Left ventricle myocardium superior (tissue), 1 donor: ENCODE measurements at regions of chr15 and their contacts with region 1.

Region 1: GRCh38 chr15:83436458-83437158 is 10.5 kb upstream of the SH3GL3 start:
- DNase-seq: no peak
- ATAC-seq: peak; percentile 39

Region 2: GRCh38 chr15:83250801-83251200 is 185.8 kb before region 1 on chr15:
- intact Hi-C with region 1: loop called (anchors 10 kb)
- DNase-seq: no peak
- ATAC-seq: no peak

Region 3: GRCh38 chr15:83559310-83559966 is 122.8 kb after region 1 on chr15:
- intact Hi-C with region 1: loop called (anchors 2 kb)
- DNase-seq: no peak
- ATAC-seq: peak; percentile 64

Region 4: DNA sequence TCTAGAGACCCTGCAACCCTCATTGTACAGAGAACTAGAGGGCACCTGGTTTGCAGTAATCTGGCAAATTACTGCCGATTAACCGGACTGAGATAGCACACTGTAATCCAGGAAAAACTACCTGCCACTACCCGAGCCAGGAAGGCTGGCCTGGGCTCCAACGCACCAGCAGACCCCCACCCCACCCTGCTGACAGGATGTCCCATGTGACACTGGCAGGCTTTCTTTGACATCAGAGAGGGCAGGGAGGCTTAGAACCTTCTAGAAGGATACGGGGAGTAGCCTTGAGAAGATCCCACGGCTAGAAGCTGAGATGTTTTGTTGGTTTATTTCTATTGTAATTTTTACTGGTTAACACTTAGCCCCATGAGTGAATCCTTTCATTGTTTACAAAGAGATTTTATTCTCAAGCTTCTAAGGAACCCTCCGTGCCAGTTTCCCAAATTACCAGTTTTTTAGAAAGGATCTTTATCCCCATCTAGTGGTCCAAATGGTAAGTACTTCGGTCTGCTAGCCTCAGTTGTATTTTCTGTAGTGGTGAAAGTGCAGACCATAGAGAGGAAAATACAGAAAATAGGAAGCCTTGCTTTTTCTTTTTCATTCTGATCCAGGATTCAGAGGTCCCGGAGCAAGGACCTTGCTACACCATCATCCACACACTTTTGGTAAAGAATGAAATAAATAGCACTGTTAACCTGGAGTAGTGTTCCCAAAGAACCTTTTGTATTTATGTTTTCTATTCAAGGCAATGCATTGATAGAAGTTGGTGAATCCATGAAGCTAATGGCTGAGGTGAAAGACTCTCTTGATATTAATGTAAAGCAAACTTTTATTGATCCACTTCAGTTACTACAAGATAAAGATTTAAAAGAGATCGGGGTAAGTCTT is 135.5 kb after region 1 on chr15:
- intact Hi-C with region 1: no loop called
- DNase-seq: no peak
- ATAC-seq: no peak

Region 5: GRCh38 chr15:83626171-83626802 is 189.7 kb after region 1 on chr15:
- intact Hi-C with region 1: no loop called
- DNase-seq: no peak
- ATAC-seq: no peak